Activated T-helper 1 cell treated with anti-CD3 and anti-CD28 coated beads, Interleukin-12 subunit alpha, Interleukin-12 subunit beta, Interleukin-2, Interleukin-4 antibody, amounts not matched to agents 30 ng/mL and 10 ng/mL and 1 ng/mL, durations not matched to agents 14 hours and 24 hours and 36 hours (primary cell): ENCODE measurements at regions of chr6 and their contacts with region 1.

Region 1: DNA sequence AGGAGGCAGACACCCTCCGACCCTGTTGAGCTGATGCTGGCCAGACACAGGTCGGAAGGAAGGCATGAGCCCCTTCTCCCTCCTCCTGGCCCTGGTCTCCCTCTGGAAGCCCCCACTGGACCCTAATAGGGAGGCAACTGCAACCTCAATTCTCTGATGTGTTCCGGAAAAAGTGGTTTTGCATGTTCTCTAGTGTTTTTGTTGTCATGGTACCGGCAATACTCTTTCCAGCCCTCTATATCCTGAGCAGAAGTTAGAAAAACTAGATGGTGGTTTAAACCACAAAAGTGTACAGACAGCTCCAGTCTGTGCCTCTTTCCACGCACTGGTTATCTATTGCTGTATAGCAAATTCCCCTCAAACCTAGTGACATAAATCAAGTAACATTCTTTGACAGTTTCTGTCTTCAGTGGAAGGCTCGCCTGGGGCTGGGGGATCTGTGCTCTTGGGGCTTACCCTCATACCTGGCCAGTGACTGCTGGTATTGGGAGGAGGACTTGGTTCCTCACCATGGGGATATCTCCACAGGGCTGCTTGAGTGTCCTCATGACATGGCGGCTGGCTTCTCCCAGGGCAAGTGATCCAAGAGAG is 37.0 kb downstream of the SYTL3 start:
- DNase-seq: peak; percentile 61
- H3K4me3 Mint-ChIP-seq: peak overlapping the region; percentile 74
- H3K27ac Mint-ChIP-seq: peak overlapping the region; percentile 90
- H3K4me1 Mint-ChIP-seq: peaks cover 62% of the 10 kb centered on the region
- H3K27me3 Mint-ChIP-seq: no peaks in the 10 kb centered on the region

Region 2: GRCh38 chr6:157867155-157867559 is 819.7 kb before region 1 on chr6:
- intact Hi-C with region 1: no loop called
- DNase-seq: no peak
- H3K4me3 Mint-ChIP-seq: peak overlapping the region; percentile 7
- H3K27ac Mint-ChIP-seq: no peak overlapping the region
- H3K4me1 Mint-ChIP-seq: peaks cover 16% of the 10 kb centered on the region
- H3K27me3 Mint-ChIP-seq: peaks cover 8% of the 10 kb centered on the region

Region 3: GRCh38 chr6:158660333-158660754 is 26.5 kb before region 1 on chr6:
- intact Hi-C with region 1: loop called (anchors 1 kb)
- DNase-seq: no peak
- H3K4me3 Mint-ChIP-seq: no peak overlapping the region
- H3K27ac Mint-ChIP-seq: no peak overlapping the region
- H3K4me1 Mint-ChIP-seq: peaks cover 46% of the 10 kb centered on the region
- H3K27me3 Mint-ChIP-seq: no peaks in the 10 kb centered on the region

Region 4: DNA sequence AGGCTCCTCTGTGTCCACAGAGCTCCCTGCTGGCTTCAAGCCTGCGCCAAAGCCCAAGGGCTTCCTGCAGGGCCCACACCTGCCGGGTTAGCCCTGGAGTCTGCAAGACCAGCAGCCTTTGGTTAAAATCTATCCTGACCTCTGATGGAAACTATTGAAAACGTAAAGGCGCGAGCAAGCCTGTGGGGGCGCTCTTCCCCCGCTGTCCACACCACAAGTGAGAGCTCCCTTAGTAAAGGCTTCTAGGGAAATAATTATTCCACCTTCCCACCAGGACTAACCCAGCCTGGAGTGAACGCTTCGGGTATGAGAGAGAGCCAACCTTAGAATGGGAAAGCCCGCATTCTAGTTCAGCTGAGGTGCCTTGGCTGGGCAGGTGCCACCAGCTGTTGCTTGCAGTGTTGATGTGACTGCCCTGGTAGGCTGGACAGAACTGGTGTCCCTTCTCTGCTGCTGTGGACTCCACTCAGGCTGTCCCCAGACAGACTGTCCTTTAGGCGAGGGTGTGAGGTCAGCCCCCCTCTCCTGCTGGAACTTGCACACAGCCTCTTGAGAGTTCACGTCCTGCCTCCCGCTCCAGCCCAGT is 31.7 kb after region 1 on chr6:
- intact Hi-C with region 1: loop called (anchors 2 kb)
- DNase-seq: no peak
- H3K4me3 Mint-ChIP-seq: no peak overlapping the region
- H3K27ac Mint-ChIP-seq: no peak overlapping the region
- H3K4me1 Mint-ChIP-seq: peaks cover 69% of the 10 kb centered on the region
- H3K27me3 Mint-ChIP-seq: peaks cover 2% of the 10 kb centered on the region

Region 5: DNA sequence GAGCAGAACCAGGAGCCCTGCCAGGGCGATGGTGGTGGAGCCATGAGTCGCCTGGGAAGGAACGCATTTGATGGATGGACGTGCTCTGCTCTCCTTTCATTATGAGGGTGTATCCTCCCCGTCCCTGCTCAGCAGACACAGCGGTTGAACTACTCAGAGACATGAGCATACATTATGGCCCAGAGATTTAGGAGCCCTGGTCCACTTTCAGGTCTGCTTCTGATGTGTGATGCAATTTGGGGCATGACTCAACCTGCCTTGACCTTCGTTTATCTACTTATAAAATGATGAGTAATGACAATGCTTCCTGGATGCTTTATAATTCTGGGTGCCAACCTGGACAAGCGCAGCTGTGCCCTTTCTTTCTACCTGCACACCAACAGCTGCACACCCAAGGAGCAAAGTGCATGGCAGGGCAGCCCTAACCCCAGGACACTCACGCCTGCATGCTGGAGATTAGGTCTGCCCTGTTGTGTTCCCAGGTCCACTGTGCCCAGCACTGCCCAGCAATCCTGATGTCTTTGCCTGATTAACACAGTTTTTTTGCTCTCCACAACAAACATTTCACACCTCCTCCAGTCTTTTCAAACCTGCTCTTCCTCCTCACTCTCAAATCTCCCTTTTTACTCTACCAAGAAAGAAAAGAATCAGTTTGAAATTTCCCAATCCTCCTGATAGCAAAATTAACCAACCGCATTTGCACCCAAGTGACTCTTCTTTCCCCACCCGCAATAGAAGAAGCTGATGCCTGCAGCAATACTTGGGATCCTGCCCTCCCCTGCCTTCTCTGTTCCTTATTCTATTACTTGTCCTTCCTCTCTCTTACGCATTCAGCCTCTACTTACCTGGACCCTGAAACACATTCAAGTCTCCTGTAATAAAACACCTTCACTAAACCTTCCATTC is 51.1 kb after region 1 on chr6:
- intact Hi-C with region 1: no loop called
- DNase-seq: no peak
- H3K4me3 Mint-ChIP-seq: no peak overlapping the region
- H3K27ac Mint-ChIP-seq: peak overlapping the region; percentile 0
- H3K4me1 Mint-ChIP-seq: peaks cover 17% of the 10 kb centered on the region
- H3K27me3 Mint-ChIP-seq: no peaks in the 10 kb centered on the region